ENCODE measurements at regions of chr5 and their contacts with region 1.

Region 1: GRCh38 chr5:131382407-131383395 is 118.8 kb downstream of the CDC42SE2 start:
- DNase-seq: peak in 8 of 9 donors; percentile 43 to 88 (median 82)
- ATAC-seq: peak; percentile 81
- H3K4me3 ChIP-seq: no peak overlapping the region
- H3K4me3 Mint-ChIP-seq: peak overlapping the region; percentile 40 to 86 (median 72)
- H3K27ac ChIP-seq: peak overlapping the region; percentile 97
- H3K27ac Mint-ChIP-seq: peak overlapping the region; percentile 94 to 99 (median 98)
- H3K4me1 ChIP-seq: peaks cover 74 to 76% of the 10 kb centered on the region in 2 donors
- H3K4me1 Mint-ChIP-seq: peaks cover 41 to 100% (median 92%) of the 10 kb centered on the region in 7 donors
- H3K27me3 ChIP-seq: no peaks in the 10 kb centered on the region
- H3K27me3 Mint-ChIP-seq: no peaks in the 10 kb centered on the region

Region 2: GRCh38 chr5:131109540-131110255 is 273.0 kb before region 1 on chr5:
- CTCF ChIA-PET with region 1: no interaction called
- POLR2A ChIA-PET with region 1: no interaction called
- intact Hi-C with region 1: loop called in 1 of 2 experiments (anchors 1 kb)
- DNase-seq: peak in 7 of 9 donors; percentile 13 to 66 (median 57)
- ATAC-seq: peak; percentile 87
- H3K4me3 ChIP-seq: no peak overlapping the region
- H3K4me3 Mint-ChIP-seq: peak overlapping the region in 1 of 10 donors; percentile 7
- H3K27ac ChIP-seq: no peak overlapping the region
- H3K27ac Mint-ChIP-seq: no peak overlapping the region
- H3K4me1 ChIP-seq: no peaks in the 10 kb centered on the region
- H3K4me1 Mint-ChIP-seq: peaks cover 0 to 17% (median 9%) of the 10 kb centered on the region in 7 donors
- H3K27me3 ChIP-seq: no peaks in the 10 kb centered on the region
- H3K27me3 Mint-ChIP-seq: no peaks in the 10 kb centered on the region

Region 3: DNA sequence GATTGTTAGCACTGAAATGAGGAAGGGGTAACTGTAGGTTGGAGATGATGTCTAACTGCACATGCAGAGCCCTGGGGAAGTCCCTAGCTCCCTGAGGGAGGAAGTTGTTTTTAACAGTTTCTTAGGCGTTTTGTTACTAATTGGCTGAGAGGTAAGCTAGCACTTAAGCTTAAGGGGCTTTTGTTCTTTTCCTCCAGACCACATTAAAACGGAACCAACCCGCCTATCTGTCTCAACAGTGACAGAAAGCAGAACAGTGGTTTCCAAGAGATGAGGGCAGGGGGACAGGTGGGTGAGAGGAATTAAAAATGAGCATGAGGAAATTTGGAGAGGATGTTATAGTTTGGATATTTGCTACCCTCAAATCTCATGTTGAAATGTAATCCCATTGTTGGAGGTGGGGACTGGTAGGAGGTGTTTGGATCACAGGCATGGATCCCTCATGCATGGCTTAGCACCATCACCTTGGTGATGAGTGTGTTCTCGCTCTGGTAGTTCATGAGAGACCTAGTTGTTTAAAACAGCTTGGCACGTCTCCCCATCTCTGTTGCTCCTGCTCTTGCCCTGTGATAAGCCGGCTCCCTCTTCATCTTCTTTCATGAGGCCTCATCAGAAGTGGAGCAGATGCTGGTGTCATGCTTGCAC is 173.1 kb before region 1 on chr5:
- CTCF ChIA-PET with region 1: interaction called, 4 read pairs
- POLR2A ChIA-PET with region 1: interaction called, 9 read pairs
- intact Hi-C with region 1: loop called in 1 of 2 experiments (anchors 1 kb)
- DNase-seq: peak; percentile 11 to 91 (median 84)
- ATAC-seq: peak; percentile 98
- H3K4me3 ChIP-seq: peak overlapping the region; percentile 21
- H3K4me3 Mint-ChIP-seq: peak overlapping the region; percentile 72 to 90 (median 80)
- H3K27ac ChIP-seq: peak overlapping the region; percentile 77
- H3K27ac Mint-ChIP-seq: peak overlapping the region; percentile 91 to 98 (median 96)
- H3K4me1 ChIP-seq: peaks cover 18 to 37% of the 10 kb centered on the region in 2 donors
- H3K4me1 Mint-ChIP-seq: peaks cover 42 to 75% (median 61%) of the 10 kb centered on the region in 7 donors
- H3K27me3 ChIP-seq: no peaks in the 10 kb centered on the region
- H3K27me3 Mint-ChIP-seq: no peaks in the 10 kb centered on the region

Region 4: GRCh38 chr5:131263648-131264450 is 118.9 kb before region 1 on chr5 and contains the start of gene CDC42SE2:
- CTCF ChIA-PET with region 1: interaction called, 35 read pairs
- POLR2A ChIA-PET with region 1: interaction called, 70 read pairs
- intact Hi-C with region 1: loop called (anchors 1 kb)
- DNase-seq: peak; percentile 81 to 95 (median 90)
- ATAC-seq: peak; percentile 94
- H3K4me3 ChIP-seq: peak within 1 kb of the TSS; percentile 87
- H3K4me3 Mint-ChIP-seq: peak within 1 kb of the TSS; percentile 80 to 97 (median 92)
- H3K27ac ChIP-seq: peak within 1 kb of the TSS; percentile 98
- H3K27ac Mint-ChIP-seq: peak within 1 kb of the TSS; percentile 88 to 98 (median 95)
- H3K4me1 ChIP-seq: peaks cover 36% of the 10 kb centered on the region in 2 donors
- H3K4me1 Mint-ChIP-seq: peaks cover 25 to 61% (median 47%) of the 10 kb centered on the region in 7 donors
- H3K27me3 ChIP-seq: no peaks in the 10 kb centered on the region
- H3K27me3 Mint-ChIP-seq: no peaks in the 10 kb centered on the region
- total RNA-seq, gene CDC42SE2: 143 to 265 (median 215) TPM

Region 5: GRCh38 chr5:131322926-131323325 is 59.8 kb before region 1 on chr5:
- CTCF ChIA-PET with region 1: interaction called, 3 read pairs
- POLR2A ChIA-PET with region 1: interaction called, 3 read pairs
- intact Hi-C with region 1: loop called in 1 of 2 experiments (anchors 2 kb)
- DNase-seq: no peak
- ATAC-seq: peak; percentile 14
- H3K4me3 ChIP-seq: no peak overlapping the region
- H3K4me3 Mint-ChIP-seq: peak overlapping the region in 8 of 10 donors; percentile 8 to 61 (median 50)
- H3K27ac ChIP-seq: no peak overlapping the region
- H3K27ac Mint-ChIP-seq: peak overlapping the region; percentile 56 to 89 (median 71)
- H3K4me1 ChIP-seq: peaks cover 25 to 46% of the 10 kb centered on the region in 2 donors
- H3K4me1 Mint-ChIP-seq: peaks cover 47 to 90% (median 72%) of the 10 kb centered on the region in 7 donors
- H3K27me3 ChIP-seq: no peaks in the 10 kb centered on the region
- H3K27me3 Mint-ChIP-seq: no peaks in the 10 kb centered on the region

Region 6: GRCh38 chr5:131357739-131358561 is 24.8 kb before region 1 on chr5:
- CTCF ChIA-PET with region 1: interaction called, 17 read pairs
- POLR2A ChIA-PET with region 1: interaction called, 9 read pairs
- intact Hi-C with region 1: loop called (anchors 1 to 2 kb)
- DNase-seq: peak in 6 of 9 donors; percentile 23 to 52 (median 40)
- ATAC-seq: peak; percentile 73
- H3K4me3 ChIP-seq: no peak overlapping the region
- H3K4me3 Mint-ChIP-seq: peak overlapping the region; percentile 14 to 75 (median 56)
- H3K27ac ChIP-seq: peak overlapping the region; percentile 58
- H3K27ac Mint-ChIP-seq: peak overlapping the region; percentile 82 to 93 (median 86)
- H3K4me1 ChIP-seq: peaks cover 37 to 41% of the 10 kb centered on the region in 2 donors
- H3K4me1 Mint-ChIP-seq: peaks cover 32 to 83% (median 75%) of the 10 kb centered on the region in 7 donors
- H3K27me3 ChIP-seq: no peaks in the 10 kb centered on the region
- H3K27me3 Mint-ChIP-seq: no peaks in the 10 kb centered on the region

Region 7: DNA sequence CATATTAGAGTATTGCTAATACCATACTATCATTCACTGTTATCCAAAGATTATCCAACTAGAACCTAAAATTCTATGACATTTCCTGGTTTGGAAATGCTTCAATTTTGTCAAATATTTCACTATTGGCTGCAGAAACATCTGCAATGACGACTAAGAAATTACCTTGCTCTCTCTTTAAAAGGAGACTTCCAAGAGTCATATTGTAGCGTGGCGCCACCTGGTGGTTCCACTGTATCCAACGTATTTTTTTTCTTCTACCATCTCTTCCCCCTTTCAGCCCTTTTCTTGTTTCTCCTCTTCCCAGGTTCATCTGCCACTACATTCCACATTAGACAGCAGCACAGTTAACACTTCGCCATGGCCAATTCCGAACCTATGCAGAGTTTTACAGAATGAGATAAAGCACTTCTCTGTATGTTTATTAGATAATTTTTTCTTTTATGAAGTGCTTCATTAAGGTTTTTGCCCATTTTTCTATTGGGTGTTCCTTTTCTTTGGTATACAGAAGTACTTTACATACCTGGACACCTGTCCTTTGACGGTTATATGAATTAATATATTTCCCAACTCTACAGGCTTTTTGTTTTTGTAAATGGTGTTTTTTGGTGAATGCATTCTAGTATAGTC is 34.7 kb after region 1 on chr5:
- CTCF ChIA-PET with region 1: interaction called, 8 read pairs
- POLR2A ChIA-PET with region 1: no interaction called
- intact Hi-C with region 1: loop called (anchors 1 to 5 kb)
- DNase-seq: peak; percentile 61 to 78 (median 74)
- ATAC-seq: peak; percentile 81
- H3K4me3 ChIP-seq: no peak overlapping the region
- H3K4me3 Mint-ChIP-seq: peak overlapping the region in 7 of 10 donors; percentile 27 to 70 (median 45)
- H3K27ac ChIP-seq: peak overlapping the region; percentile 23
- H3K27ac Mint-ChIP-seq: peak overlapping the region; percentile 68 to 95 (median 81)
- H3K4me1 ChIP-seq: peaks cover 8 to 14% of the 10 kb centered on the region in 2 donors
- H3K4me1 Mint-ChIP-seq: peaks cover 17 to 52% (median 46%) of the 10 kb centered on the region in 7 donors
- H3K27me3 ChIP-seq: no peaks in the 10 kb centered on the region
- H3K27me3 Mint-ChIP-seq: no peaks in the 10 kb centered on the region

Region 8: GRCh38 chr5:133347039-133347438 is 1964.3 kb after region 1 on chr5:
- CTCF ChIA-PET with region 1: no interaction called
- POLR2A ChIA-PET with region 1: no interaction called
- intact Hi-C with region 1: no loop called
- DNase-seq: peak in 1 of 9 donors; percentile 8
- ATAC-seq: no peak
- H3K4me3 ChIP-seq: no peak overlapping the region
- H3K4me3 Mint-ChIP-seq: no peak overlapping the region
- H3K27ac ChIP-seq: no peak overlapping the region
- H3K27ac Mint-ChIP-seq: no peak overlapping the region
- H3K4me1 ChIP-seq: no peaks in the 10 kb centered on the region
- H3K4me1 Mint-ChIP-seq: no peaks in the 10 kb centered on the region
- H3K27me3 ChIP-seq: no peaks in the 10 kb centered on the region
- H3K27me3 Mint-ChIP-seq: peaks cover 5 to 30% (median 7%) of the 10 kb centered on the region in 5 donors